PC-3 (cell line): ENCODE measurements at regions of chr4 and their contacts with region 1.

Region 1: DNA sequence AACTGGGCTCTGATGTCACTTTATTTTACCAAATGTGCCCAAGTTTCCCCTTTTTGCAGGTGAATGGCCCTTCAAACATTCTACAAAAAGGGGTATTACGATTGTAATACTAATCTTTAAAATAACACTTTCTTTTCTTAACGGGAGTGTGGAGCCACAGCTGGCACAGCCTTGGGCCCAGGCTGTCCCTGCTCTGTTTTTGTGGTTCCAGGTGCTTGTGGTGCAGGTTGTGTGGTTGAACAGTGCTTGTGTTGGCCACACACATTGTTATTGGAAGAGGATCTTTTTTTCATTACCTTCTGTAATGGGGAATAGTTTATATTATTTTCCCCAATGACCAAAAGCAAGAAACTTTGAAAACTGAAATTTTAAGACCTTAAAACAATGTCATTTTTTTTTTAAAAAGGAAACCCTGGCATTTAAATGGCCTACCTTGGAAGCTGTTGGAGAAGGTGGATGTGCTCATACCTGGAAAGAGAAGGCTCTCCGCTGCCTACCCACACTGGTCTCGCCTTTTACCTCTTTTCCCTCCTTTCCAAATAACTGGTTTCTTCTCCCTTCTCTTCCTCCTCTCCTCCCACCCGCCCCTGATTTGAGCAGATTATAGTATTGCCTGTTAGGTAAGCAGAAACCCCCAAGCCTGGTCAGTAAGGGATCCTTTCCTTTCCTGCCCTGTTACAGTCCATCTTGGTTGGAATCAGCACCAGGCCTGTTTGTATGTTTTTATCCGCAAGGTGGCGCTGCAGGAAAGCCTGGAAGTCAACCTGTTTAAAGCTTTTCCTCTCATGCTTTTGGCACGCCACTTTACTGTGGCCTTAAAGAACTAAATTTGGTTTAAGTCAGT is 28.6 kb downstream of the HADH start:
- DNase-seq: peak; percentile 78
- ATAC-seq: peak; percentile 73
- H3K4me3 ChIP-seq: no peak overlapping the region
- H3K27ac ChIP-seq: no peak overlapping the region
- H3K4me1 ChIP-seq: no peaks in the 10 kb centered on the region
- H3K27me3 ChIP-seq: no peaks in the 10 kb centered on the region
- CTCF ChIP-seq: peak; percentile 83

Region 2: DNA sequence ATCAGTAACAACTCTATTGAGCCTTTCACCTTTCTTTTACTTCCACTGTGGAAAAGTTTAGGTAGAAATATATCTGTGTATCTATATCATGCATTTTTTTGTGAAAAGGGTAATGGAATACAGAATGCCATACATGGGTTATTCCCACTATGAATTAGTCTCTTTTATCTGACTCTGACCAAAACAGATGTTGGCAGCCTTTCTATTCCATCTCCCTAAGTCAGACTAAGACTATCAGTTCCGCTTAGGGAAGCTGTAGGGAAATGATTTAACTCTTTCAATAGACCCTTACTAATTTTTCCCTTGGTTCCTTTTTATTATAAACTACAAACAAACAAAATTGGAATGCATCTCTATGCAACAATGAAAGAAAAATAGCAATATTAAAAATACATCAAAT is 242.8 kb after region 1 on chr4:
- CTCF ChIA-PET with region 1: interaction called, 12 read pairs
- POLR2A ChIA-PET with region 1: no interaction called
- intact Hi-C with region 1: no loop called
- DNase-seq: no peak
- ATAC-seq: no peak
- H3K4me3 ChIP-seq: no peak overlapping the region
- H3K27ac ChIP-seq: no peak overlapping the region
- H3K4me1 ChIP-seq: no peaks in the 10 kb centered on the region
- H3K27me3 ChIP-seq: no peaks in the 10 kb centered on the region
- CTCF ChIP-seq: no peak

Region 3: GRCh38 chr4:108512615-108513505 is 494.6 kb after region 1 on chr4:
- CTCF ChIA-PET with region 1: no interaction called
- POLR2A ChIA-PET with region 1: no interaction called
- intact Hi-C with region 1: loop called (anchors 5 kb)
- DNase-seq: peak; percentile 25
- ATAC-seq: peak; percentile 50; the same call in 1 of the 2 replicates
- H3K4me3 ChIP-seq: no peak overlapping the region
- H3K27ac ChIP-seq: no peak overlapping the region
- H3K4me1 ChIP-seq: no peaks in the 10 kb centered on the region
- H3K27me3 ChIP-seq: peaks cover 22% of the 10 kb centered on the region
- CTCF ChIP-seq: peak; percentile 45

Region 4: DNA sequence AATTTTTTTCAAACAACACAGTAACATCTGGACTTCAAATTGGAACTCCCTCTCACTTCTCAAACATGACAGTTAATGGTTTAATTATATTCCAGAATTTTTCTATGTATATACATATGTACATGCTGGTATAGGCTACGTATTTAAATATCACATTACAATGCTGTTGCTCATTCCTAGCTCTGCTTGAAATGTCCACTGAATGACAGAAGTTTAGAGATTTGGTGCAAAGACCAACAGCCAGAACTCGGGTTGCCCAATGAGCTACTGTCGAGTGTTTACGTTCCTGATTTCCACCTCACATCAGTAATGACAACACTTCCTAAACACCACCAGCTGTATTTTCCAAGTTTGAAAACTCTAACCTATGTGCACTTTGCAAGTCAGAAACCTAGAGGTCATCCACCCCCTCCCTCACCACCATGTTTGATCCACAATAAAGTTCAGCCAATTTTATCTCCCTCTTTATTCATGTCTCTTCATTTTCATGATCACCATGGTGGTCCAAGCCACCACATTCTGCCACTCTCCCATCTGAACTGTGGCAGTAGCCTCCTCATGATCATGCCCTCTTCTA is 552.8 kb after region 1 on chr4:
- CTCF ChIA-PET with region 1: interaction called, 6 read pairs
- POLR2A ChIA-PET with region 1: no interaction called
- intact Hi-C with region 1: loop called (anchors 2 kb)
- DNase-seq: no peak
- ATAC-seq: no peak
- H3K4me3 ChIP-seq: no peak overlapping the region
- H3K27ac ChIP-seq: no peak overlapping the region
- H3K4me1 ChIP-seq: no peaks in the 10 kb centered on the region
- H3K27me3 ChIP-seq: 0 out of 2 replicates have a peak, but pooled peaks cover 17% of the 10 kb centered on the region
- CTCF ChIP-seq: no peak